ENCODE measurements at regions of chr6 and their contacts with region 1.

Region 1: GRCh38 chr6:57221936-57222742 is at the start of gene RAB23:
- DNase-seq: peak; percentile 84
- H3K4me3 Mint-ChIP-seq: peak within 1 kb of the TSS; percentile 95
- H3K27ac Mint-ChIP-seq: peak within 1 kb of the TSS; percentile 78
- H3K4me1 Mint-ChIP-seq: peaks cover 20% of the 10 kb centered on the region
- H3K27me3 Mint-ChIP-seq: peaks cover 26% of the 10 kb centered on the region
- total RNA-seq, gene RAB23: 3.0 to 3.5 TPM

Region 2: DNA sequence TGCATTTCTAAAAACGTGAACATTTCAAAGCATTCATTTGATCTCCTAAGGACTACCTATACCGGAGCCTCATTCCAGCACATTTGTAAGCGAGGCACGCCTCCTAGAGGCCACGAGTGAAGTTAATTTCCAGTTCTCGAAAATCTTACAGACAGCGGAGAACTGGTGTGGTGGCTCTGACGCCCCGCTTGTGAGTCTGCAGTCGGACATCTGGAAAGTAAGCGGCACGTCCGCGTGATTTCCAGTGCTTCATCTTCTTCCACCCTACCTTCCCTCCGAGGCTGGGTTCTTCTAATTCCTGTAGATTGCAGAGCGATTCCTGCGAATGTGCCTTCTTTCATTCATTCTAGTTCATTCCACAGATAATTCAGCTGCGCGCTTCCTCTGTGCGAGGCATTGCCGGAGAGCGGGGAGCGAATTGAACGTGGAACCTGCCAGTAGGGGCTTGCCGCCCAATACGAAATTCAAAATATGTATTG is 94.5 kb after region 1 on chr6:
- CTCF ChIA-PET with region 1: interaction called, 7 read pairs
- POLR2A ChIA-PET with region 1: interaction called, 12 read pairs
- DNase-seq: peak; percentile 86
- H3K4me3 Mint-ChIP-seq: peak overlapping the region; percentile 97
- H3K27ac Mint-ChIP-seq: peak overlapping the region; percentile 91
- H3K4me1 Mint-ChIP-seq: peaks cover 40% of the 10 kb centered on the region
- H3K27me3 Mint-ChIP-seq: peaks cover 3% of the 10 kb centered on the region

Measured in activated CD4-positive, alpha-beta memory T cell treated with anti-CD3 and anti-CD28 coated beads, Interleukin-2, amount 10 ng/mL, durations not matched to agents 7 days and 5 days (primary cell).